T-cell (primary cell): ENCODE measurements at regions of chr1 and their contacts with region 1.

Region 1: DNA sequence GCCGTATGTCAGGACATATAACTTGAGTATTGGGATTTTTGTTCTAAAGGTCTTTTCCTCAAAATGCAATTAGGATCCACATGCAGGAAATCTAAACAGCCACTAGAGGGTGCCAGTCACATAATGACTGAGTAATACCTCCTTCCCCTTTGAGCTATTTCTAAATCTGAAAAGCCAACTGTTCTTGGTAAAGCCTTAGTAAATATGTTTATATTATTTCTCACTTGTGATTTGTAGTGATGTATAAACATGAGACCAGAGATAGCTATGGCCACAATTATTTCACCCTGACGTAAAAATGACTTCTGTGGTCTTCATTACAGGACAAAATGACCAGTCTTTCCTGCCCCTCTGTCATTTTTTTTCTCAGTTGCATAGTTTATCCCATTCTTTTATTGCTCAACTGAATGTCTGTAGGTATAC is 41.0 kb upstream of the DR1 start:
- DNase-seq: peak in 29 of 35 experiments; percentile 3 to 80 (median 28)
- ATAC-seq: peak in 3 of 4 experiments; percentile 40 to 49 (median 45)
- H3K4me3 ChIP-seq: no peak overlapping the region
- H3K4me3 Mint-ChIP-seq: no peak overlapping the region
- H3K27ac ChIP-seq: no peak overlapping the region
- H3K27ac Mint-ChIP-seq: no peak overlapping the region
- H3K4me1 ChIP-seq: no peaks in the 10 kb centered on the region
- H3K4me1 Mint-ChIP-seq: no peaks in the 10 kb centered on the region
- H3K27me3 ChIP-seq: no peaks in the 10 kb centered on the region
- H3K27me3 Mint-ChIP-seq: no peaks in the 10 kb centered on the region

Region 2: DNA sequence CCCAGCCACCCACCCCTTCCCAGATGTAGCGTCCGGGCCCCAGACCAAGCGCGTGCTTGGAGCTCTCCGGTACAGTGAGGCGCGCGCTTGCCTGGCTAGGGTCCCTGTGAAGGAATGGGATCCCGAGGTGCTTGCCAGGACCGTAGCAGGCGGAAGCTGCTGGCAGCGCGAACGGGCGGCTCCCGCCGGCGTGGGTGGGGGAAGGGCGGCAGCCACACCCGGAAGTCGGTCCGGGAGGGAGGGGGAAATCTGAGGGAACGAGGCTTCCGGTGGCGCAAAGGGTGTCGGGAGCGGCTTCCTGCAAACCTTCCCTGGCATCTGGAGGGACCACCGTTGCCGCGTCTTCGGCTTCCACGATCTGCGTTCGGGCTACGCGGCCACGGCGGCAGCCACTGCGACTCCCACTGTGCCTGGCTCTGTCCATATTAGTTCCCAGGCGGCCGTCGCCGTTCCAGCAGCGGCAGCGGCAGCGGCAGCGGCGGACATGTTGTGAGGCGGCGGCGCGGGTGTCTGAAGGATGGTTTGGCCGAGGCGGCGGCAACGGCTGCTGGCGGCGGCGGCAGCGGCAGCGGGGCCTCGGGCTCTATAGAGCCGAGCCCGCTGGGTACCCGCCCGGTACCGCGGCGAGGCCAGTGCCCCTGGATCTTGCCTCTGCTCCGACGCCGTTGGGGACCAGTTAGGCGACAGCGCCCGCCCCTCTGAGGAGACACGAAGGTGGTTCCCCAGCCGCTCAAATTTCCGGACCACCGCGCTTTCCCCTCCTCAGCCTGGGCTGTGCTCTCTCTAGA is 41.1 kb after region 1 on chr1 and contains the start of gene DR1:
- CTCF ChIA-PET with region 1: interaction called, 5 to 33 read pairs
- POLR2A ChIA-PET with region 1: interaction called in 1 of 2 experiments, 3 read pairs
- DNase-seq: peak; percentile 75 to 93 (median 85)
- ATAC-seq: peak; percentile 84 to 87 (median 86)
- H3K4me3 ChIP-seq: peak within 1 kb of the TSS; percentile 82 to 99
- H3K4me3 Mint-ChIP-seq: peak within 1 kb of the TSS; percentile 94 to 98 (median 97)
- H3K27ac ChIP-seq: peak within 1 kb of the TSS; percentile 82
- H3K27ac Mint-ChIP-seq: peak within 1 kb of the TSS; percentile 94 to 96
- H3K4me1 ChIP-seq: peaks cover 7 to 39% of the 10 kb centered on the region in 2 experiments
- H3K4me1 Mint-ChIP-seq: peaks cover 40 to 43% (median 41%) of the 10 kb centered on the region in 3 donors
- H3K27me3 ChIP-seq: no peaks in the 10 kb centered on the region
- H3K27me3 Mint-ChIP-seq: no peaks in the 10 kb centered on the region
- total RNA-seq, gene DR1: 58.8 to 72.3 (median 65.1) TPM

Region 3: DNA sequence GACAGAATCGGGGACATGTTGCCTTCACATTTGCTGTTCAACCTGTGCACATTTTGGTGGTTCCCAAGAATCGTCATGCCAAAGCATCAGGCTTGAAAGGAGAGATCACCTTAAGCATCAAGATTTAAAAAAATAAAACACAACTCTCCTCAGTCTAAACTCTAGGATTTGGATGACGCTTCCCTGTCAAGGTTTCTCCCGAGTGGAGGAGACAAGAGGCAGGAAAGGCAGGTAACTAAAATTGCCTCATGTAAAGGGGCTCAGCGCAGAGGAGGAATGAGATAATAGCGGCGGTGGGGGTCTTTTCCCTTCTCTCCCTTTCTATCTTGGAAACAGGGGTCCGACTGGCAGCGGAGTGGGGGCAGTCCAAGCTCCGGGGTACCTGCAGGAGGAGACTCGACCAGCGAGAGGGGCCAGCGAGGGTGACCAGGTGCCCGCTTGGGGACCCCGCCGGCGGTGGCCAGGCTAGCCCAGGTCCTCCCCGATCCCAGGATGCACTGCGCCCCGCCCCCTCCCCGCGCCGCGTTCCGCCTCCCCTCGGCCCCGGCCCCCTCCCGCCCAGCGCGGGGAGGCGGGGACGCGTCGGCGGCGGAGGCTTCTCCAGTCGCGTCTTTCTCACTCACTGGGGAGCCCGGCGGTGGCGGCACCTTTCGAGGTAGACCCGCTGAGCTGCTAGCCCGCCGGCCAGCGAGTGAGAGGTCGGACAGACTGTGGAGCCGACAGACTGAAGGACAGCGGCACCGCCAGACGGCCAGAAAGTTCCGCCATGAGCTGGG is 143.0 kb after region 1 on chr1 and contains the start of gene FNBP1L:
- CTCF ChIA-PET with region 1: interaction called, 6 to 11 read pairs
- POLR2A ChIA-PET with region 1: no interaction called
- DNase-seq: peak in 34 of 35 experiments; percentile 3 to 70 (median 44)
- ATAC-seq: peak; percentile 79 to 92 (median 86)
- H3K4me3 ChIP-seq: peak within 1 kb of the TSS; percentile 61 to 92
- H3K4me3 Mint-ChIP-seq: peak within 1 kb of the TSS; percentile 91 to 95 (median 92)
- H3K27ac ChIP-seq: no peak within 1 kb of the TSS
- H3K27ac Mint-ChIP-seq: peak within 1 kb of the TSS; percentile 66 to 69
- H3K4me1 ChIP-seq: peaks cover 8 to 22% of the 10 kb centered on the region in 2 experiments
- H3K4me1 Mint-ChIP-seq: peaks cover 15 to 24% (median 20%) of the 10 kb centered on the region in 3 donors
- H3K27me3 ChIP-seq: peaks cover 2 to 35% of the 10 kb centered on the region in 2 experiments
- H3K27me3 Mint-ChIP-seq: peaks cover 27 to 46% of the 10 kb centered on the region in 2 donors
- total RNA-seq, gene FNBP1L: 1.2 to 3.2 (median 1.6) TPM

Region 4: DNA sequence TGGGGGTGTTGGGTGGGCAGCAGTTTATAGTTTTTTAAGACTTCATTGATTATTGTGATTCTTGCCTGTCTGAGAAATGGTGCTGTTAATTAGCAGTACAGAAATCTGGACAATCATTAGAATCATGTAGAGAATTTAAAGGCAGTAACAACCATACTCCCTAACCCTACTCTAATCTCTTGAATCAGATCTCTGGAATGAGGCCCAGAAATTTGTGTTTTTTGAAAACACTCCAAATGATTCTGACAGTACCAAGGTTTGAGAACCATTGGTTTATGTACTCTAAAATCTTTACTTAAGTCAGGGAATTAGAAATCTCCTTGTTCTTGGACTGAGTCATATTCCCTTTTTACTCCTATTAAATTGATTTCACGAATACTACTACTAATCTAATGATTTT is 167.2 kb after region 1 on chr1:
- CTCF ChIA-PET with region 1: no interaction called
- POLR2A ChIA-PET with region 1: interaction called in 1 of 2 experiments, 12 read pairs
- DNase-seq: no peak
- ATAC-seq: no peak
- H3K4me3 ChIP-seq: no peak overlapping the region
- H3K4me3 Mint-ChIP-seq: no peak overlapping the region
- H3K27ac ChIP-seq: no peak overlapping the region
- H3K27ac Mint-ChIP-seq: no peak overlapping the region
- H3K4me1 ChIP-seq: no peaks in the 10 kb centered on the region
- H3K4me1 Mint-ChIP-seq: no peaks in the 10 kb centered on the region
- H3K27me3 ChIP-seq: peaks cover 0 to 3% of the 10 kb centered on the region in 2 experiments
- H3K27me3 Mint-ChIP-seq: peaks cover 4 to 15% of the 10 kb centered on the region in 2 donors

Region 5: GRCh38 chr1:93629099-93630059 is 324.7 kb after region 1 on chr1:
- CTCF ChIA-PET with region 1: interaction called, 7 to 16 read pairs
- POLR2A ChIA-PET with region 1: no interaction called
- DNase-seq: peak in 28 of 35 experiments; percentile 9 to 79 (median 32)
- ATAC-seq: peak; percentile 68 to 79 (median 72)
- H3K4me3 ChIP-seq: no peak overlapping the region
- H3K4me3 Mint-ChIP-seq: no peak overlapping the region
- H3K27ac ChIP-seq: no peak overlapping the region
- H3K27ac Mint-ChIP-seq: no peak overlapping the region
- H3K4me1 ChIP-seq: no peaks in the 10 kb centered on the region
- H3K4me1 Mint-ChIP-seq: no peaks in the 10 kb centered on the region
- H3K27me3 ChIP-seq: no peaks in the 10 kb centered on the region
- H3K27me3 Mint-ChIP-seq: no peaks in the 10 kb centered on the region

Region 6: DNA sequence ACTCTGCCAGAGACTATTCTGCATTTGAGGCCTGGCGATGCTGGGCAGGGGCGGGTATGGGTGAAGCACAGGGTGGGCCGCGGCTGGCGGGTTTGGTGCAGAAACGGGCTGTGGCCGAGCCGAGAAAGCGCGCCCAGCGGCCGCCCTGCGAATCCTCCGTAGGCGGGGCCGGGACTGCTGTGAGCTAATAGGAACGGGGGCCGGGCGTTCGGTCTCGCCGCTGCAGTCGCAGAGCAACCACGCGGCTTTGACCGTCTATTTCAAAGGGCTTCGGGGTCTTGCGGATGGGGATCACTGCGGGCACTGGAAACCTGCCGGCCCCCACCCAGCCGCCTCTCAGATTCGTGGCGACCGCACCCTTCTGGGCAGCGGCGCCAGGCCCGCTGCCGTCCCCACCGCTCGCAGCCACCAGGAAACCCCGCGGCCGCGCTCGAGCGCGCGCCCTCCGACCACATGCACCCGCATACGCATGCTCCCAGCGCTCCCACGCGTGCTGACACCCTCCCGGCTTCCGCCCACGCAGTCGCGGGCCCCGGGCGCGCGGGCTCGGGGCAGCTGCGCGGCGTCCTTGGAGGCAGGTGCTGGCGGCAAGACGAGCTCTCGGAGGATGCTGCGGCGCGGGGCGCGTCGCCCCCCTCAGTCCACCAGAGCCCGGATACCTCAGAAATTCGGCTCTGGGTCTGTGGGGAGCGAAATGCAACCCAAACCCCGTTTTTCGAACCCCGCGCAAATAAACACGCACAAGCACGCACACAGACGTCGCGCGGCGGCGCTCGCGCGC is 541.7 kb after region 1 on chr1:
- CTCF ChIA-PET with region 1: interaction called, 6 to 15 read pairs
- POLR2A ChIA-PET with region 1: no interaction called
- DNase-seq: peak; percentile 73 to 92 (median 82)
- ATAC-seq: peak; percentile 54 to 62 (median 60)
- H3K4me3 ChIP-seq: peak overlapping the region; percentile 82 to 86
- H3K4me3 Mint-ChIP-seq: peak overlapping the region; percentile 85 to 98 (median 88)
- H3K27ac ChIP-seq: peak overlapping the region; percentile 92
- H3K27ac Mint-ChIP-seq: peak overlapping the region; percentile 93 to 95
- H3K4me1 ChIP-seq: peaks cover 6 to 36% of the 10 kb centered on the region in 2 experiments
- H3K4me1 Mint-ChIP-seq: peaks cover 31 to 39% (median 36%) of the 10 kb centered on the region in 3 donors
- H3K27me3 ChIP-seq: no peaks in the 10 kb centered on the region
- H3K27me3 Mint-ChIP-seq: peaks cover 0 to 5% of the 10 kb centered on the region in 2 donors